ENCODE measurements at regions of chr22 and their contacts with region 1.

Region 1: DNA sequence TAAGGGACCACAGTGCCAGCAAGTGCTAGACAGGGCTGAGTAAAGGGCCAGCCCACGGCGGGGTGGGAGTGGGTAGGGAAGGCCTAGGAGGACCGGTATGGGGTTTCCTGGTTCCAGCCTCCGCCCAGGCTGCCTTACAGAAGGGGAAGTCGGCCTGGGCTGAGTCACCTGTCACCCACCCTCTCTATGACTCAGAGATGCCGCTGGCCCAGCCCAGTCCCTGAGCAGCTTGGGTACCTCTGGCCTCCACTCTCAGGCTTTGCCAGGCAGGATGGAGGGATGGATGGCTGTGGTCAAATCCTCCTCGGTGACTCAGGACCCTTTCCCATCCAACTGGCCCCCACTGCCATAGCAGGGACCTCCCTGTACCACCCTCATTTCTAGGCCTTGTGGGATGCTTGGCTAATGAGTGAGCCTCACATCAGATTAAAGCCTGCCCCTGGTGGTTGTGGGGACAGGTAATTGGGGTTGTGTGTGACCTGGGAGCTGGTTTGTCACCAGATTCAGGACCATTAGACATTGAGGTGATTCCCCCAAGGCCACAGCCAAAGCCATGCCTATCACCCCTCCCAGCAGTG is 13.9 kb downstream of the SLC35E4 start:
- DNase-seq: peak in 1 of 3 donors; percentile 82
- ATAC-seq: peak; percentile 77 to 97
- H3K4me3 ChIP-seq: no peak overlapping the region
- H3K27ac ChIP-seq: no peak overlapping the region
- H3K4me1 ChIP-seq: no peaks in the 10 kb centered on the region
- H3K27me3 ChIP-seq: no peaks in the 10 kb centered on the region

Region 2: GRCh38 chr22:30336752-30337460 is 312.6 kb before region 1 on chr22:
- intact Hi-C with region 1: no loop called
- DNase-seq: peak; percentile 58 to 86 (median 85)
- ATAC-seq: peak; percentile 66 to 81
- H3K4me3 ChIP-seq: no peak overlapping the region
- H3K27ac ChIP-seq: peak overlapping the region; percentile 32
- H3K4me1 ChIP-seq: peaks cover 4% of the 10 kb centered on the region
- H3K27me3 ChIP-seq: no peaks in the 10 kb centered on the region

Region 3: GRCh38 chr22:30694171-30694639 is 44.7 kb after region 1 on chr22:
- intact Hi-C with region 1: loop called in 1 of 4 experiments (anchors 10 kb)
- DNase-seq: peak; percentile 22 to 74 (median 72)
- ATAC-seq: peak; percentile 53 to 65
- H3K4me3 ChIP-seq: peak overlapping the region; percentile 42
- H3K27ac ChIP-seq: peak overlapping the region; percentile 63
- H3K4me1 ChIP-seq: no peaks in the 10 kb centered on the region
- H3K27me3 ChIP-seq: no peaks in the 10 kb centered on the region

Measured in right cardiac atrium (tissue), 5 donors.